Endothelial cell of umbilical vein (primary cell): ENCODE measurements at regions of chr15 and their contacts with region 1.

Region 1: DNA sequence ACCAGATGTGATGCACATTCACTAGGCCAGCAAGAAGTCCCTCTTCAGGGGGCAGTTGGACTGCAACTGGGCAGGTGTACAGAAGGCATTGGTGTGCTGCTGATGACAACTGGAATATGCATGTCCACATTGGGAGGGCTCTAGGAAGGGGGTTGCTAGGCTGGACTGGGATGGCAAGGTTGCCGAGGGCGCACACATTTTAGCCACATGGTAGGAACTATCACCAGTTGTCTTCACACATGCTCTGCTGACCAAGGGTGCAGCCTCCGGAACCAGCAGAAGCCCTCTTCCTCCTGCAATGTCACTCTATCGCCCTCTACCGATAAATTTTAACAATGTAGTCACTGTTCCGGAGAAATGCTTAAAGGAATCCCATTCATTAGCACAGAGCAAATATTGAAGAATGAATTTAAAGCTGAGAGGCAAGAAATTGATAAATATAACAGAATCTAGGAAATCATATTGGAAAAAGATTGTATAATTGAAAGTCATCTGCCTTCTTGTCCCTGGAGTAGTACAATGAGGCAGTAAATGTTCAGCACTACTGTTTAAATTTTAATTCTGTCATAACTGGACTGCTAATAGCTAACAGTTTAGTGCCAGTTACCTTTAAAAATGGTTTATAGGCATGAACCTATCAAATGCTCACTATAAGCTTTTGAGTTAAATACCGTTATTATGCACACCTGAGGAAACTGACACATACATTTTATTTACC is 22.6 kb upstream of the LYSMD4 start:
- DNase-seq: peak; percentile 73
- H3K4me3 ChIP-seq: no peak overlapping the region
- H3K27ac ChIP-seq: no peak overlapping the region
- H3K4me1 ChIP-seq: no peaks in the 10 kb centered on the region
- H3K27me3 ChIP-seq: no peaks in the 10 kb centered on the region
- CTCF ChIP-seq: peak; percentile 67 to 68
- POLR2A ChIP-seq: no peak

Region 2: GRCh38 chr15:99536422-99537040 is 219.3 kb before region 1 on chr15:
- CTCF ChIA-PET with region 1: no interaction called
- POLR2A ChIA-PET with region 1: no interaction called
- dilution Hi-C with region 1: no loop called
- intact Hi-C with region 1: no loop called
- DNase-seq: peak; percentile 84
- H3K4me3 ChIP-seq: no peak overlapping the region
- H3K27ac ChIP-seq: peak overlapping the region; percentile 42
- H3K4me1 ChIP-seq: peaks cover 15% of the 10 kb centered on the region
- H3K27me3 ChIP-seq: no peaks in the 10 kb centered on the region
- CTCF ChIP-seq: no peak
- POLR2A ChIP-seq: no peak

Region 3: DNA sequence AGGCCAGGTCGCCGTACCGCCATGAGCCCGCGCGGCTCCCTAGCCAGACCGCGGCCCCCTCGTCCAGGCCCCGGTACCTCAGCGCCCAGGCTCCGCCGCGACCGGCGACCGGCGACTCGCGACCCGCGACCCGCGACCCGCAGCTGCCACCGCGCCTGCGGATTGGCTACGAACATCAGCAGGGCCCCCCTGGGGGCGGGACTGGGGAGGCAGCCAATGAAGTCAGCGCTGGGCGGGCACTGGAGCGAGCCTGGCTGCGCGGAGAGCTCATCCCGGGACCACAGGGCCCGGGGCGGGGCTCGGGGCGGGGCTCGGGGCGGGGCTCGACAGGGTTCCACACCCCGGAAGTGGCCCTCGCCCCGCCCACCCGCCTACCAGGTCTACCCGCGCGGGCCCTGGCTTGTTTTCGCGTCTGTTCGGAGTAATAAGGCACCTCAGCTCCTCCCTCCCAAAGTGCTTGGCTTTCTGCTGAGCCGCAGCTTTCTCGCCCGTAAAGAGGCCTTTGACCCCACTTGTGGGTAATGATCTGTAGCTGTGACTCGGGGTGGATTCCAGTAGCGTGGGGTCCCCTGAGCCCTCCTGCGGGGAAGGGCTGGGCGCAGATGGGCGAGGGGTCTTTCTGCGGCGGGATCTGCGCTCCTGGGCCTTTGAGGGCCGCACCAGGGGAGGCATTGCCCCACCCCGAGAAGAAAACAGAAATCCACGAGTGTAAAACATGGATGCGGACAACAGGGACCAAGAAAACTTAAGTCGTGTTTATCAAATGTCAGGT is 22.4 kb before region 1 on chr15 and contains the start of gene LYSMD4:
- CTCF ChIA-PET with region 1: interaction called, 39 read pairs
- POLR2A ChIA-PET with region 1: interaction called, 3 read pairs
- dilution Hi-C with region 1: no loop called
- intact Hi-C with region 1: loop called (anchors 2 kb)
- DNase-seq: peak; percentile 93
- H3K4me3 ChIP-seq: peak within 1 kb of the TSS; percentile 63 to 79 (median 71)
- H3K27ac ChIP-seq: peak within 1 kb of the TSS; percentile 21
- H3K4me1 ChIP-seq: peaks cover 5% of the 10 kb centered on the region
- H3K27me3 ChIP-seq: no peaks in the 10 kb centered on the region
- CTCF ChIP-seq: no peak
- POLR2A ChIP-seq: no peak
- total RNA-seq, gene LYSMD4: 7.0 and 8.4 TPM in 2 replicates

Region 4: GRCh38 chr15:99777136-99777535 is 21.3 kb after region 1 on chr15:
- CTCF ChIA-PET with region 1: interaction called, 18 read pairs
- POLR2A ChIA-PET with region 1: no interaction called
- dilution Hi-C with region 1: no loop called
- intact Hi-C with region 1: no loop called
- DNase-seq: no peak
- H3K4me3 ChIP-seq: no peak overlapping the region
- H3K27ac ChIP-seq: no peak overlapping the region
- H3K4me1 ChIP-seq: no peaks in the 10 kb centered on the region
- H3K27me3 ChIP-seq: no peaks in the 10 kb centered on the region
- CTCF ChIP-seq: no peak
- POLR2A ChIP-seq: no peak